Right cardiac atrium (tissue), 5 donors: ENCODE measurements at regions of chr7 and their contacts with region 1.

Region 1: GRCh38 chr7:112080441-112080840 is 125.8 kb downstream of the DOCK4 start:
- DNase-seq: no peak
- ATAC-seq: peak; percentile 50 to 73
- H3K4me3 ChIP-seq: no peak overlapping the region
- H3K27ac ChIP-seq: no peak overlapping the region
- H3K4me1 ChIP-seq: peaks cover 1% of the 10 kb centered on the region
- H3K27me3 ChIP-seq: no peaks in the 10 kb centered on the region

Region 2: GRCh38 chr7:112192236-112193154 is 112.1 kb after region 1 on chr7:
- intact Hi-C with region 1: loop called in 1 of 4 experiments (anchors 10 kb)
- DNase-seq: peak in 2 of 3 donors; percentile 16 to 23
- ATAC-seq: peak; percentile 52 to 92
- H3K4me3 ChIP-seq: no peak overlapping the region
- H3K27ac ChIP-seq: no peak overlapping the region
- H3K4me1 ChIP-seq: no peaks in the 10 kb centered on the region
- H3K27me3 ChIP-seq: no peaks in the 10 kb centered on the region